Calu3 (cell line): ENCODE measurements at regions of chr14 and their contacts with region 1.

Region 1: DNA sequence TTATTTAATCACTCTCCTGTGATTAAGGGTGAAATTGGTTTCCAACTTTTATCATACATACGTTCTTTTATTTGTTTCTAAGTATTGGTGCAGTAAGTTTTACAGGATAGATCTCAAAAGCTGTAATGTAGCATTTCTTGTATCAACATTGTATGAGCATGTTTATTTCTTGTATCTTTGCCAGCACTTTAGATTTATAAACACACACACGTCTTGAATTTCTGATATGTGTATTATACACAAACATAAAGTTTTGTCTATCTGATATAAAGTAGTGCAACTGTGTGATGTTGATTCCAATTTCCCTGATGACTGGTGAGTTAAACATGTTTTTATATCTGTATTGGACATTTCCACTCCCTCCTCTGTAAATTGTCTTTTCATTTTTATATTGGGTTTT is 134.7 kb downstream of the NOVA1 start:
- DNase-seq: no peak
- H3K4me3 Mint-ChIP-seq: no peak overlapping the region
- H3K27ac Mint-ChIP-seq: no peak overlapping the region
- H3K4me1 Mint-ChIP-seq: no peaks in the 10 kb centered on the region
- H3K27me3 Mint-ChIP-seq: no peaks in the 10 kb centered on the region
- CTCF ChIP-seq: no peak

Region 2: GRCh38 chr14:26143057-26143456 is 320.1 kb before region 1 on chr14:
- CTCF ChIA-PET with region 1: interaction called, 13 read pairs
- intact Hi-C with region 1: no loop called
- DNase-seq: no peak
- H3K4me3 Mint-ChIP-seq: no peak overlapping the region
- H3K27ac Mint-ChIP-seq: no peak overlapping the region
- H3K4me1 Mint-ChIP-seq: no peaks in the 10 kb centered on the region
- H3K27me3 Mint-ChIP-seq: no peaks in the 10 kb centered on the region
- CTCF ChIP-seq: no peak

Region 3: DNA sequence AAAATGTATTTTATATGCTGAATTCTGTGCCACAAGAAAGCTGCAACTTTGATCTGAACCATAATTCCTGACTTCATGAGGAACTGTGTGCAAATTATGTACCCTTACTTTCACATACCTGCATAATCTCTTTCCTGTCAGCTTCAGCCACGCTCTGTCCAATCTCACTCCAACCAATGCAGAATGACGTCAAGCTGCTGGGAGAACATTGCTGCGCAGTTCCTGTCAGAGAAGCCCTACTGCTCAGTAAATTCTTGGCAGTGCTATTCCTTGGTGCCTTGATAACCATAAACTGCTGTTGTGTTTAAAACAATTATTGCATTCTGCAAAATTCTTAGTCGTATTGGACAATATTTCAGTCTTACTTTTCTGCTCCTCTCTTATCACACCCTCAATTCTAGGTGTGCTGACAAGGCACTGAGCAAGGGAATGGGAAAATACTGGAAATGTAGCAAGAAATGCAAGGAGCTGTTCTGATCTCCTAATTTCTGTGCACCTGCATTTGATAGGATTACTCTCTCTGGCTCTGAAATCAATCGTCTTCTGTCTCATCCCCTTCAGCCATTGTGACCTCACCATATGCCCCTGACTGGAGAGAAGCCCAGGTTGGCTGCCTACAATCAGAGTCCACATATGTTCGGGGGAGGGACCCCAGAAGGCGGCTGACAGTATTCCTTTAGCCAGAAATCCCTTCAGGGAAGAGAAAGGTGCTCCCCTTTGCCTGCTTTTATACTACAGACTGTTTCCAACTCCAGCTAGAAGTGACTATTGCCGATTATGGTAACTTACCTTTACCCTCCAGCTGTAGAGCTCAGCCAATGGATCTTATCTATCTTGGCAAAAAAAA is 409.6 kb after region 1 on chr14:
- CTCF ChIA-PET with region 1: no interaction called
- intact Hi-C with region 1: no loop called
- DNase-seq: no peak
- H3K4me3 Mint-ChIP-seq: no peak overlapping the region
- H3K27ac Mint-ChIP-seq: no peak overlapping the region
- H3K4me1 Mint-ChIP-seq: no peaks in the 10 kb centered on the region
- H3K27me3 Mint-ChIP-seq: no peaks in the 10 kb centered on the region
- CTCF ChIP-seq: no peak